OCI-LY7 (cell line): ENCODE measurements at regions of chr11 and their contacts with region 1.

Region 1: DNA sequence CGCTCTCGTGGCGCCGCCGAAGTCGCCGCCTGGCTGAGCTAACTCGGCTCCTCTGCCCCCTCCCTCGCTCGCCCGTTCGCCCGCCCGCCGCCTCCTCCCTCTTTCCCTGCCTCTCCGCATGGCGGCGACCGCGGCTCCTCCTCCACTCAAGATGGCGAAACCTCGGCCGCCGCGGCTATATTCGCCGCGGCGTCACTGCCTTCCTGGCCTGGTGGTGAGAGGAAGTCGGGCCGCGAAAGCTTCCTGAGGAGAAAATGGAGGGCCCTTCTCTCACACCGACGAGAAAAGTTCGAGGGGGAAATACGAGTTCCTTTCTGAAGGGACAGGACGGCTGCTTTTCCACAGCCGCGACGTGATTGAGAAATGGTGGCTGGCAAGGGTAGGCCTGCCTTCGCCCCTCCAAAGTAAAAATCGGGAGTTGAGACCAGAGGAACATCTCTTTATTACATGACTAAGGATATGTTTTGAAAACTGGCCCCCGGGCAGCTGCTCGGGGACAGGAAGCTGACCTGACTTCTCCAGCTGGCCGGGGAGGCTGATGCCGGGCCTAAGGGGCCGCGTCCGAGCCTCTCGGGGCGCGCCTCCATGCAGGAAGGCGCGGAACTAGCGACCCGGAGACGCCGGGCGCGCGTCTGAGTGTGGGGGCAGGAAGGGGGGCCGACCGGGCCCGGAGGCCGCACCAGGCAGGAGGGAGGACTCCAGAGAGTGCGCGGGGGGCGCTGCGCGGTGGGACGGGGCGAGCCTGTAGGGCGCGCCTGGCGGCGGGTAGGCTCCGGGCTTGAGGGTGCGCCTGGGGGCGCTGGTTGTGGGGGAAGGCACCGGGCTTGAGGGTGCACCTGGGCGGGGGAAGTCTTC is at the start of gene DDX6:
- DNase-seq: peak; percentile 89
- H3K4me3 ChIP-seq: peak within 1 kb of the TSS; percentile 99
- H3K27ac ChIP-seq: peak within 1 kb of the TSS; percentile 96
- H3K4me1 ChIP-seq: peaks cover 48% of the 10 kb centered on the region
- CTCF ChIP-seq: peak; percentile 63; the same call in 1 of the 2 replicates
- total RNA-seq, gene DDX6: 46.5 and 55.0 TPM in 2 replicates

Region 2: GRCh38 chr11:118610804-118611795 is 180.2 kb before region 1 on chr11:
- CTCF ChIA-PET with region 1: no interaction called
- POLR2A ChIA-PET with region 1: no interaction called
- intact Hi-C with region 1: no loop called
- DNase-seq: peak; percentile 71
- H3K4me3 ChIP-seq: no peak overlapping the region
- H3K27ac ChIP-seq: no peak overlapping the region
- H3K4me1 ChIP-seq: peaks cover 22% of the 10 kb centered on the region
- CTCF ChIP-seq: peak; percentile 76

Region 3: GRCh38 chr11:118807800-118808778 is 16.8 kb after region 1 on chr11:
- CTCF ChIA-PET with region 1: interaction called, 3 read pairs
- POLR2A ChIA-PET with region 1: interaction called, 21 read pairs
- intact Hi-C with region 1: no loop called
- DNase-seq: no peak
- H3K4me3 ChIP-seq: no peak overlapping the region
- H3K27ac ChIP-seq: no peak overlapping the region
- H3K4me1 ChIP-seq: peaks cover 7% of the 10 kb centered on the region
- CTCF ChIP-seq: no peak

Region 4: GRCh38 chr11:118820412-118821357 is 29.3 kb after region 1 on chr11:
- CTCF ChIA-PET with region 1: interaction called, 7 read pairs
- POLR2A ChIA-PET with region 1: interaction called, 32 read pairs
- intact Hi-C with region 1: loop called (anchors 1 kb)
- DNase-seq: peak; percentile 91
- H3K4me3 ChIP-seq: peak overlapping the region; percentile 61
- H3K27ac ChIP-seq: peak overlapping the region; percentile 80
- H3K4me1 ChIP-seq: peaks cover 61% of the 10 kb centered on the region
- CTCF ChIP-seq: no peak

Region 5: DNA sequence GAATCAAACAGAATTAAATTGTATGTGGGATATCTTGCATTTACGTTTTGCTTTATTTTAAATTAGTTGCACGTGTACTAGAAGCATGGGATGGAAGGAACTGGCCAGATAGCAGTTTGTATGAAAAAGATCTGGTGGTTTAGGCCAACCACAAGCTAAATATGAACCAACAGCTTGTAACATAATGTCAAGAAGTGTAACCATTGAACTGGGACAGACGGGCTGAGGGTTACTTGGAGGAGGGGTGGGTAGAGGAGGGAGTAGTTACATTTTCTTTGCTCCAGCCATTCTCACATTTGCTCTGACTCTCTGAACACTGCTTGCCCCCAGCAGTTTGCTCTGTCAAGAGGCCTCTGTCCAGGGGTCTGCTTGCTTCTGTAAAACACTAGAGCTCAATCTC is 60.6 kb after region 1 on chr11:
- CTCF ChIA-PET with region 1: interaction called, 4 read pairs
- POLR2A ChIA-PET with region 1: interaction called, 13 read pairs
- intact Hi-C with region 1: loop called (anchors 1 kb)
- DNase-seq: peak; percentile 86
- H3K4me3 ChIP-seq: peak overlapping the region; percentile 33
- H3K27ac ChIP-seq: peak overlapping the region; percentile 84
- H3K4me1 ChIP-seq: peaks cover 56% of the 10 kb centered on the region
- CTCF ChIP-seq: no peak

Region 6: DNA sequence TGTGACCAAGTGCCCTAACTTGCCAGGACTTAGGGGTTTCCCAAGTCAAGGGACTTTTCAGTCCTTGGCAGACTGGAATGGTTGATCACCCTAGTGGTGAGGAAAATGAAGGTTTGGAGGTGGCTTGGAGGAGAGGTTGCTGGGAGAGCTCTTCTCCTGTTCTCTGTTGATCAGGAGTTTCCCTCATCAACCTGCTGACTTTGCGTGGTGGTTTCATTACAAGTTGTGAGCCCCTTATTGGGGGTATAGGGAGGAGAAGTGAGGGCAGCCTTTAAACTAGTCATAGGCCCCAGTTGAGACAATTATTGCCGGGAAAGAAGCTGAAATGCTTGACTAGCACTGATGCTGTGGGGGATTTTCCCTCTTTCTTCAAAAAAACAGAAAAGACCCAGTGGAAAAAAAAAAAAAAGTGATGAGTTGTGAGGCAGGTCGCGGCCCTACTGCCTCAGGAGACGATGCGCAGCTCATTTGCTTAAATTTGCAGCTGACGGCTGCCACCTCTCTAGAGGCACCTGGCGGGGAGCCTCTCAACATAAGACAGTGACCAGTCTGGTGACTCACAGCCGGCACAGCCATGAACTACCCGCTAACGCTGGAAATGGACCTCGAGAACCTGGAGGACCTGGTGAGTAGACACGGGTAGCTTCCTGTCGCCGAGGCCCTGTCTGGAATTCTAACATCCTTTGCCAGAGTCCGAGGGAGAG is 92.2 kb after region 1 on chr11 and contains the start of gene CXCR5:
- CTCF ChIA-PET with region 1: interaction called, 6 read pairs
- POLR2A ChIA-PET with region 1: interaction called, 35 read pairs
- intact Hi-C with region 1: no loop called
- DNase-seq: peak; percentile 89
- H3K4me3 ChIP-seq: peak within 1 kb of the TSS; percentile 61
- H3K27ac ChIP-seq: peak within 1 kb of the TSS; percentile 32
- H3K4me1 ChIP-seq: peaks cover 74% of the 10 kb centered on the region
- CTCF ChIP-seq: peak; percentile 40; the same call in 1 of the 2 replicates
- total RNA-seq, gene CXCR5: 1.4 and 3.3 TPM in 2 replicates

Region 7: DNA sequence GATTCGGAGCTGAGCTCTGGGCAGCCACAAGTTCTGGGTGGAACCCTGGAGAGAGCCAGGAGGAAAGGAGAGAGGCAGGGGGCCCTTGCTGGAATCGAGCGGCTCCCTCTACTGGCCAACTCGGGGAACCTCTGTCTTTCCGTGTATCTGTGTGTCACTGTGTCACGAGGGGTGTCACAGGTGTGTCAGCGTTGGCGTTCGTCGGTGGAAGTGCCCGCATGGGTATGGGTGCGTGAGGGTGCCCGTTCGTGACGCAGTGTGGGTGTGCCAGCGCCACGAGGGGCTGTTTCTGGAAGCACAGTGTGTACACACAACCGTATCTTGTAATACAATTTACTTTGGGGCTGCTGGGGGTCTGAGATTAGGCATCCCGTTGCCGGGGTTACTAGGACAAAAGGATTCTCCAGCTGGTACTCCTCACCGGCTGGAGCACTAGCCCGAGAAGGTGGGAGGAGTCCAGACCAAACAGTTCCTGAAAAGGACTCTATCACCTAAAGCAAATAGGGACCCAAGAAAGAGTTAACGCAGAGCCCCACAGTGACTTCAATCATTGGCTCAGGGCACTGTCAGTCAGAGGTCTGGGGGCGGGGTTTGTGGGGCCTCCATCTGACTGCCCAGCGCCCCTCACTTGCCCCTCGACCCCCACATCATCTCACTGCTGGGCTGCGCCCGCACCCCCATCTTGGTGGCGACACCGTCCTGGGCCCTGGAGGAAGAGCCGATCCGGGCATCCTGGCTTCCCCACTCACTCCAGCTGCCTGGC is 137.0 kb after region 1 on chr11:
- CTCF ChIA-PET with region 1: no interaction called
- POLR2A ChIA-PET with region 1: interaction called, 9 read pairs
- intact Hi-C with region 1: loop called (anchors 1 kb)
- DNase-seq: peak; percentile 91
- H3K4me3 ChIP-seq: peak overlapping the region; percentile 71
- H3K27ac ChIP-seq: peak overlapping the region; percentile 76
- H3K4me1 ChIP-seq: peaks cover 44% of the 10 kb centered on the region
- CTCF ChIP-seq: peak; percentile 96

Region 8: DNA sequence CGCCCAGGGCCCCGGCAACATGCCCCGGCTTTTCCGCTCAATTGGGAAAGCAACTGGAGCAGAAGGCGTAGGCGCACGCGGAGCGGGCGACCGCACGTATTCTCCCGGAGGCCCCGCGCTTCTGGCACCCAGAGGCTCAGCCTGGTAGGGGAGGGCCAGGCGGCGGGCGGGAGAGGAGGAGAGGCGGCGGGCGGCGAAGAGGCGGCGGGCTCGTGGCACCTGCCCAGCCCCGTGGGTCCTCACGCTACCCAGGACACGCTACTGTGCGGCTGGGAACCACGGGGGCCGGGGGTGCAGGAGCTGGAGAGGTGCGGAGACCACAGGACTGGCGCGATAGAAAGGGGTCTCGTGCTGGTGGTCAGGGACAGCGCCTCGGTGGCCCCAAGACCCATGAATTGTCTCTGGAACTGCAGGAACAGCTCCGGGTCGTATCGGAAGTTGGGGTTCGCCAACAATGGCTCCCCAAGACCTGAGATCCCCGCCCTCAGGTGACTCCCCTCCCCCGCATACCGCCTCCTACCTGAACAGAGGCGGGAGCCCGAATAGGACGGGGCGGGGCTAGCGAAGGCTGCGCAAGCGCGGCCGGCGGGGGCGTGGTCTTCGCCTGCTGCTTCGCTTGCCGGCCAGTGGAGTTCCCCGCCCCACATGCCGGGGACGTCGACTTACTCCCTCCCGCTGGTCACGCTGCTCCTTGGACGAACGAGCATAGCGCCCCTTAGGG is 239.2 kb after region 1 on chr11 and contains the start of gene SLC37A4:
- CTCF ChIA-PET with region 1: no interaction called
- POLR2A ChIA-PET with region 1: no interaction called
- intact Hi-C with region 1: no loop called
- DNase-seq: peak; percentile 99
- H3K4me3 ChIP-seq: peak within 1 kb of the TSS; percentile 80
- H3K27ac ChIP-seq: peak within 1 kb of the TSS; percentile 4
- H3K4me1 ChIP-seq: peaks cover 21% of the 10 kb centered on the region
- CTCF ChIP-seq: no peak
- total RNA-seq, gene SLC37A4: 14.5 and 14.8 TPM in 2 replicates